ENCODE measurements at regions of chr20 and their contacts with region 1.

Region 1: GRCh38 chr20:37564388-37565133 is 36.9 kb upstream of the BLCAP start:
- DNase-seq: peak in 6 of 7 donors; percentile 20 to 63 (median 40)
- H3K4me3 ChIP-seq: no peak overlapping the region
- H3K27ac ChIP-seq: no peak overlapping the region
- H3K4me1 ChIP-seq: no peaks in the 10 kb centered on the region
- H3K27me3 ChIP-seq: peaks cover 18% of the 10 kb centered on the region
- CTCF ChIP-seq: peak; percentile 76 to 94 (median 81)
- POLR2A ChIP-seq: no peak

Region 2: DNA sequence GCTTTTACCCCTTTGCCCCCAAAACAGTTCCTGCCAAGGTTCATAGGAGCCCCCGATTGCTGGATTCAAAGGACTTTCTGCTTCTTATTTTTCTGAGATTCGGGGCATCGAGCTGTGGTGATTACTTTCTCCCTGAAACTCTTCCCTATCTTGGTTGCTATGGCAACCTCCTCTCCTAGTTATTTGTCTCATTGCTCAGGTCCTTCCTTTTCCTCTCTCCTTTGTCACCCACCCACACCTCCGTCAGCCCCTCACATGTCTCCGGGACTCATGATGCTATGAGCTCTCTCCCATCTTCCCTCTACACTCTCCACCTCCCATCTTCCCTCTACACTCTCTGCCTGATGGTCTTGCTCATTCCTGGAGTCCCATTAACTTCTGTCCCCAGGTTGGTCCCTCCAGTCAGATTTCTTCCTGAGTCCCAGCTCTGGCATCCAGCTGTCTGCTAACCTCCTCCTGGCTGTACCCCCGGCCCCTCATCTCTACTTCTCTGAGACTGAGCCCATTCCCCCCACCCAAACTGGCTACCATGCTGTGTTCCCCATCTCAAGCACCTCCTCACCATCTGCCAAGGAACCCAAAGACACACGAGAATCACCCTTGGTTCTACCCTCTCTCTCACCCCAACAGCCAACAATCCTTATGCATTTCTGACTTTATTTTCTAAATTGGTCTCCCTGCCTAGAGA is 73.8 kb before region 1 on chr20:
- intact Hi-C with region 1: no loop called
- DNase-seq: peak in 1 of 7 donors; percentile 17
- H3K4me3 ChIP-seq: no peak overlapping the region
- H3K27ac ChIP-seq: no peak overlapping the region
- H3K4me1 ChIP-seq: no peaks in the 10 kb centered on the region
- H3K27me3 ChIP-seq: no peaks in the 10 kb centered on the region
- CTCF ChIP-seq: no peak
- POLR2A ChIP-seq: no peak

Region 3: DNA sequence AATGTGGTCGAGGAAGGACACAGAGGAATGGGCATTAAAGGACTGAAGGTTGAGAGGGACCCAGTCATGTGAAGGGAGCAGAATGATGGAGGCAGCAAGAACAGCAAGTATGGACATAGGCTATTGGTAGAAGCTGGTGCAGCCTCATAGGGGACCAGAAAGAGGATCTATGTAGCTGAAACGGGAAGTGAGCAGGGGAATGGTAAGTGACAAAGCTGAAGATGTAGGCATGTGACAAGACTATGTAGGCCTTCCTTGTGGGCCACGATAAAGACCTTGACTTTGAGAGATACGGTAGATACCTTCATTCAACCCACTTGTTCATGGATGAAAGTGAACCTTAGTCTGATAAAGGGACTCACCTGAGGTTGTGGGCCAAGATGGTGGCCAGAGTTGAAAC is 132.8 kb after region 1 on chr20:
- intact Hi-C with region 1: no loop called
- DNase-seq: no peak
- H3K4me3 ChIP-seq: no peak overlapping the region
- H3K27ac ChIP-seq: no peak overlapping the region
- H3K4me1 ChIP-seq: peaks cover 4 to 30% of the 10 kb centered on the region in 2 donors
- H3K27me3 ChIP-seq: no peaks in the 10 kb centered on the region
- CTCF ChIP-seq: no peak
- POLR2A ChIP-seq: no peak

Region 4: GRCh38 chr20:37990571-37991151 is 426.1 kb after region 1 on chr20:
- intact Hi-C with region 1: loop called in 1 of 2 experiments (anchors 10 kb)
- DNase-seq: peak in 6 of 7 donors; percentile 28 to 83 (median 56)
- H3K4me3 ChIP-seq: no peak overlapping the region
- H3K27ac ChIP-seq: peak overlapping the region in 3 of 5 donors; percentile 49 to 79 (median 66)
- H3K4me1 ChIP-seq: peaks cover 25 to 68% of the 10 kb centered on the region in 2 donors
- H3K27me3 ChIP-seq: no peaks in the 10 kb centered on the region
- CTCF ChIP-seq: no peak
- POLR2A ChIP-seq: no peak

Region 5: GRCh38 chr20:38001173-38001872 is 436.8 kb after region 1 on chr20:
- intact Hi-C with region 1: loop called (anchors 10 kb)
- DNase-seq: peak in 2 of 7 donors; percentile 19 to 35
- H3K4me3 ChIP-seq: no peak overlapping the region
- H3K27ac ChIP-seq: peak overlapping the region in 1 of 5 donors; percentile 56
- H3K4me1 ChIP-seq: peaks cover 15 to 37% of the 10 kb centered on the region in 2 donors
- H3K27me3 ChIP-seq: no peaks in the 10 kb centered on the region
- CTCF ChIP-seq: no peak
- POLR2A ChIP-seq: no peak

Region 6: GRCh38 chr20:38049800-38050199 is 485.2 kb after region 1 on chr20:
- intact Hi-C with region 1: loop called in 1 of 2 experiments (anchors 5 kb)
- DNase-seq: peak in 1 of 7 donors; percentile 26
- H3K4me3 ChIP-seq: no peak overlapping the region
- H3K27ac ChIP-seq: peak overlapping the region in 1 of 5 donors; percentile 58
- H3K4me1 ChIP-seq: peaks cover 10 to 42% of the 10 kb centered on the region in 2 donors
- H3K27me3 ChIP-seq: no peaks in the 10 kb centered on the region
- CTCF ChIP-seq: no peak
- POLR2A ChIP-seq: no peak

Region 7: GRCh38 chr20:38221119-38221589 is 656.6 kb after region 1 on chr20:
- intact Hi-C with region 1: loop called (anchors 2 to 5 kb)
- DNase-seq: peak; percentile 49 to 84 (median 71)
- H3K4me3 ChIP-seq: no peak overlapping the region
- H3K27ac ChIP-seq: no peak overlapping the region
- H3K4me1 ChIP-seq: no peaks in the 10 kb centered on the region
- H3K27me3 ChIP-seq: no peaks in the 10 kb centered on the region
- CTCF ChIP-seq: peak; percentile 81 to 95 (median 86)
- POLR2A ChIP-seq: no peak

Measured in adrenal gland (tissue), 19 donors.